Caco-2 (cell line): ENCODE measurements at regions of chr19 and their contacts with region 1.

Region 1: GRCh38 chr19:41363753-41364523 is at the start of gene B9D2:
- DNase-seq: peak; percentile 98 to 99
- H3K4me3 ChIP-seq: peak within 1 kb of the TSS; percentile 73
- H3K4me3 Mint-ChIP-seq: peak within 1 kb of the TSS; percentile 85
- H3K27ac Mint-ChIP-seq: peak within 1 kb of the TSS; percentile 93
- H3K4me1 ChIP-seq: peaks cover 10% of the 10 kb centered on the region
- H3K4me1 Mint-ChIP-seq: no peaks in the 10 kb centered on the region
- H3K27me3 ChIP-seq: no peaks in the 10 kb centered on the region
- H3K27me3 Mint-ChIP-seq: no peaks in the 10 kb centered on the region
- CTCF ChIP-seq: no peak
- total RNA-seq, gene B9D2: 3.6 and 4.0 TPM in 2 replicates

Region 2: GRCh38 chr19:41297628-41298347 is 66.2 kb before region 1 on chr19:
- CTCF ChIA-PET with region 1: no interaction called
- POLR2A ChIA-PET with region 1: no interaction called
- intact Hi-C with region 1: no loop called
- DNase-seq: no peak
- H3K4me3 ChIP-seq: no peak overlapping the region
- H3K4me3 Mint-ChIP-seq: no peak overlapping the region
- H3K27ac Mint-ChIP-seq: peak overlapping the region; percentile 39
- H3K4me1 ChIP-seq: peaks cover 13% of the 10 kb centered on the region
- H3K4me1 Mint-ChIP-seq: peaks cover 6% of the 10 kb centered on the region
- H3K27me3 ChIP-seq: no peaks in the 10 kb centered on the region
- H3K27me3 Mint-ChIP-seq: no peaks in the 10 kb centered on the region
- CTCF ChIP-seq: no peak

Region 3: DNA sequence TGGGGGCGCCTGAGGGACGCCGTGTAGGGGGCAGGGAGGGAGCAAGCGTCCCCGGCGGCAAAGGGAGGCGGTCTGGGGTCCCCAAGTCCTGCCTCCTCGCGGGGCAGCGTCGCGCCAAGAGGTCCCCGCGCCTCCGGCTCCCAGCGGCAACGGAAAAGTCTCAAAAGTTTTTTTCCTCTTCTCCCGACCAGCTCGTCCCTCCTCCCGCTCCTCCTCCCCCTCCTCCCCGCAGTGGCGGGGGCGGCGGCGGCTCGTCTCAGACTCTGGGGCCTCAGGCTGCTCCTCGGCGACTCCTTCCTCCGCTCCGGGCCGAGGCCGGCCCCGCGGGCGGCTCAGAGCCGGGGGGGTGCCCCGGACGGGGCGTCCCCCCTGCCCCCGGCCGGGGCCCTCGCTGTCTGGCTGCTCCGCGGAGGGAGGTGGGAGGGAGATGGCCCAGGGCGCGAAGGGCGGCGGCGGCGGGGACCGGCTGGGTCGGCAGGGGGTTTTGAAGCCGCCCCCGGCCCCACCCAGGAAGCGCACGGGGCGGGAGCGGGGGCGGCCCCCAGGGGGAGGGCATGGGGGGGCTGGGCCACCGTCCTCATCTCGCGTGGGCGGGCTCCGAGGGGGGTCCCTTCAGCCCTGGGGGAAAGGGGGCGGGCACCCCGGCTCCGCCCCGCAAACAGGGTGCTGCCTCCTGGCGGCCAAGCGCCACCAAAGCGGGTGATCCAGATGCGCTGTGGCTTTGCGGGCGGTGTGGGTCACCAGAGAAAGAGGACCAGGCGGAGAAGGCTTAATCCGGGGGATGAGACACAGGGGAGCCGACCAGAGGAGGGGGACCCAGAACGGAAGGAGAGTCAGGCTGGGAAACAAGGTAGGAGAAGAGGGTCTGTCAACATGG is 10.2 kb before region 1 on chr19 and contains the start of gene TGFB1:
- CTCF ChIA-PET with region 1: interaction called, 31 read pairs
- POLR2A ChIA-PET with region 1: interaction called, 17 read pairs
- intact Hi-C with region 1: loop called (anchors 1 kb)
- DNase-seq: peak; percentile 77 to 87
- H3K4me3 ChIP-seq: peak within 1 kb of the TSS; percentile 73
- H3K4me3 Mint-ChIP-seq: peak within 1 kb of the TSS; percentile 83
- H3K27ac Mint-ChIP-seq: peak within 1 kb of the TSS; percentile 23
- H3K4me1 ChIP-seq: peaks cover 4% of the 10 kb centered on the region; the same call in 1 of the 2 replicates
- H3K4me1 Mint-ChIP-seq: peaks cover 24% of the 10 kb centered on the region
- H3K27me3 ChIP-seq: no peaks in the 10 kb centered on the region; the same call in 1 of the 2 replicates
- H3K27me3 Mint-ChIP-seq: peaks cover 11% of the 10 kb centered on the region
- CTCF ChIP-seq: peak; percentile 96
- total RNA-seq, gene TGFB1: 15.0 and 15.3 TPM in 2 replicates

Region 4: GRCh38 chr19:41397086-41398049 is 33.4 kb after region 1 on chr19 and contains the starts of genes BCKDHA and EXOSC5:
- CTCF ChIA-PET with region 1: interaction called, 3 read pairs
- POLR2A ChIA-PET with region 1: no interaction called
- intact Hi-C with region 1: loop called (anchors 1 kb)
- DNase-seq: peak; percentile 99 to 100
- H3K4me3 ChIP-seq: peak within 1 kb of the TSS; percentile 97
- H3K4me3 Mint-ChIP-seq: peak within 1 kb of the TSS; percentile 99
- H3K27ac Mint-ChIP-seq: peak within 1 kb of the TSS; percentile 100
- H3K4me1 ChIP-seq: 0 out of 2 replicates have a peak, but pooled peaks cover 6% of the 10 kb centered on the region
- H3K4me1 Mint-ChIP-seq: peaks cover 15% of the 10 kb centered on the region
- H3K27me3 ChIP-seq: no peaks in the 10 kb centered on the region; the same call in 1 of the 2 replicates
- H3K27me3 Mint-ChIP-seq: no peaks in the 10 kb centered on the region
- CTCF ChIP-seq: no peak
- total RNA-seq, gene BCKDHA: 9.4 and 19.4 TPM in 2 replicates
- total RNA-seq, gene EXOSC5: 36.6 and 37.3 TPM in 2 replicates

Region 5: GRCh38 chr19:41439441-41440222 is 75.7 kb after region 1 on chr19 and contains the start of gene DMAC2:
- CTCF ChIA-PET with region 1: no interaction called
- POLR2A ChIA-PET with region 1: interaction called, 34 read pairs
- intact Hi-C with region 1: loop called (anchors 2 kb)
- DNase-seq: peak; percentile 95 to 98
- H3K4me3 ChIP-seq: peak within 1 kb of the TSS; percentile 96
- H3K4me3 Mint-ChIP-seq: no peak within 1 kb of the TSS
- H3K27ac Mint-ChIP-seq: no peak within 1 kb of the TSS
- H3K4me1 ChIP-seq: no peaks in the 10 kb centered on the region
- H3K4me1 Mint-ChIP-seq: peaks cover 6% of the 10 kb centered on the region
- H3K27me3 ChIP-seq: no peaks in the 10 kb centered on the region
- H3K27me3 Mint-ChIP-seq: peaks cover 8% of the 10 kb centered on the region
- CTCF ChIP-seq: peak; percentile 20 to 58
- total RNA-seq, gene DMAC2: 75.9 and 85.0 TPM in 2 replicates

Region 6: DNA sequence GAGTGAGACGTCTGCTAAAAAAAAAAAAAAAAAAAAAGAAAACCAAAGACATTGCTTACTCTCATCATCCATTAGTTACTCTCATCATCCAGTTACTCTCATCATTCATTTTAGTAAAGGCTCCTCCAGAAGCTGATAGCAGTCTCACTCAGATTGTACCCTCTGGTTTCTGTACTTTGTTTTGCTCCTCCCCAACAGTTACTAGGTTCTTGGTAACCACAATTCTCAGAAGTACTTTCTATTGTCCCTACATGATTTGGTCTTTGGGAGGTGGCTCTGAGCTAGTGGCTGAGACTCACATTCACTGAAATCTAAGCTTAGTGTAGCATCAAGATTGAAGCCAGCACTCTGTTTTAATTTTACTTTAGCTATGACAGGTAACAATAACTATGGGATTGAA is 93.3 kb after region 1 on chr19:
- CTCF ChIA-PET with region 1: no interaction called
- POLR2A ChIA-PET with region 1: no interaction called
- intact Hi-C with region 1: no loop called
- DNase-seq: no peak
- H3K4me3 ChIP-seq: no peak overlapping the region
- H3K4me3 Mint-ChIP-seq: no peak overlapping the region
- H3K27ac Mint-ChIP-seq: no peak overlapping the region
- H3K4me1 ChIP-seq: no peaks in the 10 kb centered on the region
- H3K4me1 Mint-ChIP-seq: no peaks in the 10 kb centered on the region
- H3K27me3 ChIP-seq: no peaks in the 10 kb centered on the region
- H3K27me3 Mint-ChIP-seq: peaks cover 18% of the 10 kb centered on the region
- CTCF ChIP-seq: no peak